ENCODE measurements at regions of chr17 and their contacts with region 1.

Region 1: GRCh38 chr17:17041571-17042380 is 481 bp upstream of the MPRIP start:
- DNase-seq: peak; percentile 97
- H3K4me3 Mint-ChIP-seq: peak overlapping the region; percentile 60
- H3K27ac Mint-ChIP-seq: no peak overlapping the region
- H3K4me1 Mint-ChIP-seq: peaks cover 45% of the 10 kb centered on the region
- H3K27me3 Mint-ChIP-seq: no peaks in the 10 kb centered on the region

Region 2: GRCh38 chr17:17088526-17089525 is 47.0 kb after region 1 on chr17:
- CTCF ChIA-PET with region 1: no interaction called
- intact Hi-C with region 1: loop called (anchors 5 kb)
- DNase-seq: peak; percentile 42
- H3K4me3 Mint-ChIP-seq: no peak overlapping the region
- H3K27ac Mint-ChIP-seq: peak overlapping the region; percentile 54
- H3K4me1 Mint-ChIP-seq: peaks cover 29% of the 10 kb centered on the region
- H3K27me3 Mint-ChIP-seq: no peaks in the 10 kb centered on the region

Region 3: GRCh38 chr17:17119533-17119932 is 77.8 kb after region 1 on chr17:
- CTCF ChIA-PET with region 1: no interaction called
- intact Hi-C with region 1: loop called (anchors 2 kb)
- DNase-seq: peak; percentile 79
- H3K4me3 Mint-ChIP-seq: no peak overlapping the region
- H3K27ac Mint-ChIP-seq: peak overlapping the region; percentile 82
- H3K4me1 Mint-ChIP-seq: peaks cover 75% of the 10 kb centered on the region
- H3K27me3 Mint-ChIP-seq: no peaks in the 10 kb centered on the region

Region 4: GRCh38 chr17:17280613-17281549 is 239.1 kb after region 1 on chr17 and contains the start of gene COPS3:
- CTCF ChIA-PET with region 1: no interaction called
- intact Hi-C with region 1: loop called (anchors 1 kb)
- DNase-seq: peak; percentile 99
- H3K4me3 Mint-ChIP-seq: peak within 1 kb of the TSS; percentile 94
- H3K27ac Mint-ChIP-seq: peak within 1 kb of the TSS; percentile 88
- H3K4me1 Mint-ChIP-seq: peaks cover 39% of the 10 kb centered on the region
- H3K27me3 Mint-ChIP-seq: no peaks in the 10 kb centered on the region
- total RNA-seq, gene COPS3: 103 to 104 TPM

Region 5: GRCh38 chr17:17305281-17305801 is 263.6 kb after region 1 on chr17:
- CTCF ChIA-PET with region 1: no interaction called
- intact Hi-C with region 1: loop called (anchors 2 kb)
- DNase-seq: peak; percentile 68
- H3K4me3 Mint-ChIP-seq: peak overlapping the region; percentile 61
- H3K27ac Mint-ChIP-seq: peak overlapping the region; percentile 37
- H3K4me1 Mint-ChIP-seq: peaks cover 28% of the 10 kb centered on the region
- H3K27me3 Mint-ChIP-seq: no peaks in the 10 kb centered on the region